Common myeloid progenitor, CD34-positive (primary cell): ENCODE measurements at regions of chr1 and their contacts with region 1.

Region 1: DNA sequence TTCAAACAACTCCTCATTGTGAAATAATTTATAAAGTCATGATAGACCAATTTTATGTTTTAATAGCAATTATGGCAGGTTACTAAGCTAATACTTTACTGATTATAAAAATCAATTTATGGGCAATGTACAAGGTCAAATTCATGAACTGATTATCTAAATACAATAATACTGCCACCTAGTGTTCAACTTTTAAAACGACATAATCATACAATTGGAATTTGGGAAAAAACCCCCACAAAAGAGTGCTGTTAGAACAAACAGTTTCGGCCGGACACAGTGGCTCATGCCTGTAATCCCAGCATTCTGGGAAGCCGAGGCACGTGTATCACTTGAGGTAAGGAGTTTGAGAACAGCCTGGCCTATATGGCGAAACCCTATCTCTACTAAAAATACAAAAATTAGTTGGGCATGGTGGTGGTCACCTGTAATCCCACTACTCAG is 14.0 kb downstream of the GTF2B start:
- DNase-seq: peak in 1 of 3 donors; percentile 21
- H3K4me3 ChIP-seq: no peak overlapping the region
- H3K27ac ChIP-seq: no peak overlapping the region
- H3K4me1 ChIP-seq: peaks cover 0 to 15% (median 10%) of the 10 kb centered on the region in 4 experiments
- H3K27me3 ChIP-seq: no peaks in the 10 kb centered on the region

Region 2: DNA sequence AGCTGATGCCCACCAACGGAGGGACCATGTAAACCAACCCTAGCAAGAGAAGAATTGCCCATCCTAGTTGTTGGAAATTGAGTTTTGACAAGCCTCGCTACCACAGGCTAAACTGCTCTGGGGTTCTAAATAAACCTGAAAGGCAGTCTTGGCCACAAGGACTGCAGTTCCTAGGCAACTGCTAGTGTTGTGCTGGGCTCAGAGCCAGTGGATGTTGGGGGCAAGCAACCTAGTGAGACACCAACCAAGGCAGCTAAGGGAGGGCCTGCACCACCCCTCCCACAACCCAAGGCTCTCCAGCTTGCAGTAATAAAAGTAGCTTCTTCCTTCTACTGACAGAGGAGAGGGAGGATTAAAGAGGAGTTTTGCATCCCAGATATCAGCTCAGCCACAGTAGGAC is 295.7 kb before region 1 on chr1:
- CTCF ChIA-PET with region 1: no interaction called
- POLR2A ChIA-PET with region 1: no interaction called
- DNase-seq: no peak
- H3K4me3 ChIP-seq: no peak overlapping the region
- H3K27ac ChIP-seq: no peak overlapping the region
- H3K4me1 ChIP-seq: no peaks in the 10 kb centered on the region
- H3K27me3 ChIP-seq: no peaks in the 10 kb centered on the region

Region 3: DNA sequence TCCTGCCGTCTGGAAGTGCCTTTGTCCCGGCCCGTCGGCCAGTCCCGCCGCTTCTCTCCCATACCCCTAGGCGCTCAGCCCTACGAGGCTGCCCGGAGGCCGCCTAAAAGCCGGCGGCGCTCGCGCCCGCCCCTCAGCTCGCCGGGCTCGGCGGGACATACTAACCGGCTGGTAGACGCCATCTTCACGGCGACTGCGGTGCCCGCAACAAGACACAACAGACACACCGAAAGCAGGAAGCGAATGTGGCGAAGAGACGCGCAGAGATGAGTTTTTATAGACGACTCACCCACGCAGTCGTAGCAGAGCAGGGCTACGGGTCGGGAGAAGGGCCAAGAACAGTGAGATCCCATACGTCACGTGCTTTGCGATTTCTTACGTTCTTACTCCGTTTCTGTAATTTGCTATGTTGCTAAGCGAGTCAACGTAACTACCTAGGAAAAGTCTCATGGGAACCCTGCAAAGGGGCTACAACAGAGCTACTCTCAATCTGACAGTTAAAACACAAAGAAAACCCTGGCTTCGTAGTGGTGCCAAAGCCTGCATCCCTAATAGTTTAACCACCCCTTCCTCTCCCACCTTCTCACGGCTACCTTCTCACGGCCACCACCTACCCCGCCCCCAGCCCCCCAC is 14.0 kb after region 1 on chr1 and contains the start of gene GTF2B:
- CTCF ChIA-PET with region 1: interaction called, 59 read pairs
- POLR2A ChIA-PET with region 1: interaction called, 4 read pairs
- DNase-seq: peak; percentile 98 to 99 (median 99)
- H3K4me3 ChIP-seq: peak within 1 kb of the TSS; percentile 82 to 100 (median 96)
- H3K27ac ChIP-seq: peak within 1 kb of the TSS; percentile 92 to 96
- H3K4me1 ChIP-seq: peaks cover 12 to 28% (median 21%) of the 10 kb centered on the region in 4 experiments
- H3K27me3 ChIP-seq: no peaks in the 10 kb centered on the region